H1 (cell line): ENCODE measurements at regions of chr22 and their contacts with region 1.

Region 1: GRCh38 chr22:19854778-19855503 is at the starts of genes GNB1L and RTL10:
- DNase-seq: peak; percentile 70 to 94
- H3K4me3 ChIP-seq: peak within 1 kb of the TSS; percentile 75 to 92 (median 87)
- H3K27ac ChIP-seq: peak within 1 kb of the TSS; percentile 80
- H3K4me1 ChIP-seq: peaks cover 0 to 24% (median 12%) of the 10 kb centered on the region in 4 experiments; a peak in 6 of 7 replicates
- H3K27me3 ChIP-seq: no peaks in the 10 kb centered on the region
- CTCF ChIP-seq: peak in 1 of 3 experiments; percentile 14; a peak in 1 of 4 replicates
- EP300 ChIP-seq: no peak
- POLR2A ChIP-seq: peak; percentile 96 to 97
- RAD21 ChIP-seq: peak; percentile 20 to 26; a peak in 2 of 4 replicates
- total RNA-seq, gene GNB1L: 14.3 and 15.6 TPM in 2 replicates
- total RNA-seq, gene RTL10: 16.1 and 18.8 TPM in 2 replicates

Region 2: GRCh38 chr22:19691721-19692341 is 163.1 kb before region 1 on chr22:
- CTCF ChIA-PET with region 1: no interaction called
- POLR2A ChIA-PET with region 1: no interaction called
- DNase-seq: no peak
- H3K4me3 ChIP-seq: no peak overlapping the region
- H3K27ac ChIP-seq: no peak overlapping the region
- H3K4me1 ChIP-seq: peaks cover 0 to 11% (median 5%) of the 10 kb centered on the region in 4 experiments; a peak in 6 of 7 replicates
- H3K27me3 ChIP-seq: no peaks in the 10 kb centered on the region
- CTCF ChIP-seq: no peak
- EP300 ChIP-seq: no peak
- POLR2A ChIP-seq: no peak
- RAD21 ChIP-seq: no peak

Region 3: DNA sequence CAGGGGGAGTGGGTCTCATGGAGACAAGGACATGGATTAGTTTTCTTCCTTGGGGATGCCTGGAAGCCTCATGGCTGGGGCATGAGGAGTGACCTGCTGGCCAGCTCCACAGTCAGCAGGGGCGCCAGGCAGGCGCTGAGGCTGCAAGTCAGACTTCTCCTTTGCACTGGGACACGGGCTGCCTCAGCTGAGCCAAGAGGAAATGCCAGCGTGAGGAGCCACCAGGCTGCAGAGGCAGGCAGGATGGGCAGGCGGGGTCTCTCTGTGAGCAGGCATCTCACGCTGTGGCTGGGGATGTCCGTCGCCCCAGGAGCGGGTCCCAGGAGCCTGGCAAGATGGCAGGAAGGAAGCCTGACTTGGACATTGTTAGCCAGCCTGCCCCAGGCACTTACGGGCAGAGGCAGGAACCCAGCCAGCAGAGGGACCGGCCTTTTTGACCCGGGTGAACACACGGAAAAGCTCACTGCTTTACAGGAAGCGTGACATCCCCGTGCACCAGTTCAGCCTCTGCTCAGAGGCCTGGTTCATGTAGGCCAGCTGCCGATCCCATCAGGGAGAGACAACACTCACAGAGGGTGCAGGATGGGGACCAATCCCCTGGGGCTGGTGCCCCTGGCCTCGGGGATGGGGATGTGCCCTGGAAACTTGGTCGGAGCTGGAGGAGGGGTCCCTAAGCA is 10.4 kb before region 1 on chr22:
- CTCF ChIA-PET with region 1: interaction called, 4 read pairs
- POLR2A ChIA-PET with region 1: interaction called, 10 read pairs
- DNase-seq: peak in 1 of 2 experiments; percentile 48
- H3K4me3 ChIP-seq: no peak overlapping the region
- H3K27ac ChIP-seq: no peak overlapping the region
- H3K4me1 ChIP-seq: peaks cover 0 to 3% (median 0%) of the 10 kb centered on the region in 4 experiments; a peak in 4 of 7 replicates
- H3K27me3 ChIP-seq: no peaks in the 10 kb centered on the region
- CTCF ChIP-seq: peak in 1 of 3 experiments; percentile 0; a peak in 1 of 4 replicates
- EP300 ChIP-seq: no peak
- POLR2A ChIP-seq: peak in 1 of 2 experiments; percentile 18; a peak in 1 of 3 replicates
- RAD21 ChIP-seq: no peak